Naive thymus-derived CD4-positive, alpha-beta T cell (primary cell): ENCODE measurements at regions of chr1 and their contacts with region 1.

Region 1: GRCh38 chr1:204363335-204364124 is 3.8 kb upstream of the PLEKHA6 start:
- DNase-seq: peak; percentile 47 to 81 (median 74)
- ATAC-seq: peak; percentile 94
- H3K4me3 ChIP-seq: peak overlapping the region; percentile 69
- H3K4me3 Mint-ChIP-seq: peak overlapping the region; percentile 37 to 84 (median 70)
- H3K27ac ChIP-seq: peak overlapping the region; percentile 58
- H3K27ac Mint-ChIP-seq: peak overlapping the region; percentile 37 to 84 (median 69)
- H3K4me1 ChIP-seq: peaks cover 11 to 12% of the 10 kb centered on the region in 2 donors
- H3K4me1 Mint-ChIP-seq: peaks cover 7 to 18% (median 13%) of the 10 kb centered on the region in 7 donors
- H3K27me3 ChIP-seq: no peaks in the 10 kb centered on the region
- H3K27me3 Mint-ChIP-seq: peaks cover 0 to 8% (median 0%) of the 10 kb centered on the region in 5 donors

Region 2: GRCh38 chr1:203914258-203914657 is 449.3 kb before region 1 on chr1:
- CTCF ChIA-PET with region 1: no interaction called
- POLR2A ChIA-PET with region 1: no interaction called
- intact Hi-C with region 1: no loop called
- DNase-seq: no peak
- ATAC-seq: no peak
- H3K4me3 ChIP-seq: no peak overlapping the region
- H3K4me3 Mint-ChIP-seq: no peak overlapping the region
- H3K27ac ChIP-seq: no peak overlapping the region
- H3K27ac Mint-ChIP-seq: no peak overlapping the region
- H3K4me1 ChIP-seq: no peaks in the 10 kb centered on the region
- H3K4me1 Mint-ChIP-seq: no peaks in the 10 kb centered on the region
- H3K27me3 ChIP-seq: no peaks in the 10 kb centered on the region
- H3K27me3 Mint-ChIP-seq: peaks cover 0 to 5% (median 4%) of the 10 kb centered on the region in 5 donors

Region 3: GRCh38 chr1:204162231-204163074 is 201.1 kb before region 1 on chr1:
- CTCF ChIA-PET with region 1: interaction called, 45 read pairs
- POLR2A ChIA-PET with region 1: interaction called, 5 read pairs
- intact Hi-C with region 1: loop called in 1 of 2 experiments (anchors 1 kb)
- DNase-seq: peak; percentile 60 to 81 (median 71)
- ATAC-seq: peak; percentile 90
- H3K4me3 ChIP-seq: no peak overlapping the region
- H3K4me3 Mint-ChIP-seq: no peak overlapping the region
- H3K27ac ChIP-seq: no peak overlapping the region
- H3K27ac Mint-ChIP-seq: no peak overlapping the region
- H3K4me1 ChIP-seq: no peaks in the 10 kb centered on the region
- H3K4me1 Mint-ChIP-seq: no peaks in the 10 kb centered on the region
- H3K27me3 ChIP-seq: no peaks in the 10 kb centered on the region
- H3K27me3 Mint-ChIP-seq: peaks cover 5 to 18% (median 9%) of the 10 kb centered on the region in 5 donors

Region 4: GRCh38 chr1:204213668-204214662 is 149.6 kb before region 1 on chr1 and contains the start of gene GOLT1A:
- CTCF ChIA-PET with region 1: interaction called, 4 read pairs
- POLR2A ChIA-PET with region 1: no interaction called
- intact Hi-C with region 1: loop called (anchors 1 to 2 kb)
- DNase-seq: peak; percentile 19 to 56 (median 49)
- ATAC-seq: peak; percentile 81
- H3K4me3 ChIP-seq: peak within 1 kb of the TSS; percentile 52
- H3K4me3 Mint-ChIP-seq: peak within 1 kb of the TSS; percentile 53 to 80 (median 74)
- H3K27ac ChIP-seq: no peak within 1 kb of the TSS
- H3K27ac Mint-ChIP-seq: peak within 1 kb of the TSS in 3 of 9 donors; percentile 0 to 25 (median 24)
- H3K4me1 ChIP-seq: peaks cover 0 to 12% of the 10 kb centered on the region in 2 donors
- H3K4me1 Mint-ChIP-seq: peaks cover 0 to 12% (median 6%) of the 10 kb centered on the region in 7 donors
- H3K27me3 ChIP-seq: no peaks in the 10 kb centered on the region
- H3K27me3 Mint-ChIP-seq: peaks cover 0 to 9% (median 0%) of the 10 kb centered on the region in 5 donors
- total RNA-seq, gene GOLT1A: not detected

Region 5: DNA sequence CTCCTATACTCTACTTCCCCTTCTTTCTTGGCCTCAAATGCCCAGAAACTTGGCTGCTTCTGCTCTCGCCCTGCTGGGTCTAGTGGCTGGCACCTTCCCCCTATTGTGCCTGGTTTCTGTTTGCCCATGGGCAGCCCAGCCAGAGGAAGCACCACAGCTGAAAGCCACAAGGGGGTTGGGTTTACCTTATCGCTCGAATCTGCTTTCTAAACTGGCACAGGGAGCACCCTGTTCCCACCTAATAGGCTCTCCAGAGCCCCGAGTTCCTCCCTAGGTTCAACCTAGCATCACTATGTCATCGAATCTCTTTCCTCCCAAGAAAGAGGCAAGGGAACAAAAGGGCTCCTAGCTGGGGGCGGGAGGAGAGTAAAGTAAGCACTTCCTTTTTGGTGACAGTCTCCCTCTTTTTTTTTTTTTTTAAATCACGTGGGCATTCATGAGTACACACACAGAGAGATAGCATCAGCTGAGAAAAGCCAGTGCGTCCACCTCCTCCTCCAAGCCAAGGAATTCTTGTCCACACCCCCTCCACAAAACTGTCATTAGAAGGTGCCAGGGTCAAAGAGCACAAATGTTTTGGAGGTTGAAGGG is 76.6 kb before region 1 on chr1:
- CTCF ChIA-PET with region 1: interaction called, 4 read pairs
- POLR2A ChIA-PET with region 1: no interaction called
- intact Hi-C with region 1: loop called (anchors 2 kb)
- DNase-seq: peak in 8 of 9 donors; percentile 23 to 56 (median 52)
- ATAC-seq: peak; percentile 89
- H3K4me3 ChIP-seq: peak overlapping the region; percentile 76
- H3K4me3 Mint-ChIP-seq: peak overlapping the region; percentile 62 to 90 (median 87)
- H3K27ac ChIP-seq: peak overlapping the region; percentile 61
- H3K27ac Mint-ChIP-seq: peak overlapping the region; percentile 81 to 96 (median 91)
- H3K4me1 ChIP-seq: peaks cover 7 to 18% of the 10 kb centered on the region in 2 donors
- H3K4me1 Mint-ChIP-seq: peaks cover 18 to 38% (median 30%) of the 10 kb centered on the region in 7 donors
- H3K27me3 ChIP-seq: peaks cover 0 to 4% of the 10 kb centered on the region in 2 donors
- H3K27me3 Mint-ChIP-seq: peaks cover 0 to 45% (median 8%) of the 10 kb centered on the region in 5 donors

Region 6: GRCh38 chr1:204377795-204378608 is 14.5 kb after region 1 on chr1:
- CTCF ChIA-PET with region 1: interaction called, 15 read pairs
- POLR2A ChIA-PET with region 1: interaction called, 4 read pairs
- intact Hi-C with region 1: no loop called
- DNase-seq: peak; percentile 28 to 57 (median 46)
- ATAC-seq: peak; percentile 71
- H3K4me3 ChIP-seq: peak overlapping the region; percentile 70
- H3K4me3 Mint-ChIP-seq: peak overlapping the region in 9 of 10 donors; percentile 88 to 96 (median 93)
- H3K27ac ChIP-seq: peak overlapping the region; percentile 4
- H3K27ac Mint-ChIP-seq: peak overlapping the region in 5 of 9 donors; percentile 3 to 79 (median 55)
- H3K4me1 ChIP-seq: peaks cover 4 to 6% of the 10 kb centered on the region in 2 donors
- H3K4me1 Mint-ChIP-seq: peaks cover 8 to 20% (median 13%) of the 10 kb centered on the region in 7 donors
- H3K27me3 ChIP-seq: peaks cover 0 to 9% of the 10 kb centered on the region in 2 donors
- H3K27me3 Mint-ChIP-seq: peaks cover 6 to 45% (median 11%) of the 10 kb centered on the region in 5 donors

Region 7: GRCh38 chr1:204417231-204417997 is 53.9 kb after region 1 on chr1:
- CTCF ChIA-PET with region 1: no interaction called
- POLR2A ChIA-PET with region 1: no interaction called
- intact Hi-C with region 1: no loop called
- DNase-seq: no peak
- ATAC-seq: peak; percentile 85
- H3K4me3 ChIP-seq: no peak overlapping the region
- H3K4me3 Mint-ChIP-seq: peak overlapping the region in 2 of 10 donors; percentile 2 to 29
- H3K27ac ChIP-seq: no peak overlapping the region
- H3K27ac Mint-ChIP-seq: peak overlapping the region in 6 of 9 donors; percentile 5 to 67 (median 7)
- H3K4me1 ChIP-seq: no peaks in the 10 kb centered on the region
- H3K4me1 Mint-ChIP-seq: peaks cover 4 to 29% (median 11%) of the 10 kb centered on the region in 7 donors
- H3K27me3 ChIP-seq: no peaks in the 10 kb centered on the region
- H3K27me3 Mint-ChIP-seq: no peaks in the 10 kb centered on the region